Posterior cingulate gyrus (tissue), 11 donors: ENCODE measurements at regions of chr6 and their contacts with region 1.

Region 1: DNA sequence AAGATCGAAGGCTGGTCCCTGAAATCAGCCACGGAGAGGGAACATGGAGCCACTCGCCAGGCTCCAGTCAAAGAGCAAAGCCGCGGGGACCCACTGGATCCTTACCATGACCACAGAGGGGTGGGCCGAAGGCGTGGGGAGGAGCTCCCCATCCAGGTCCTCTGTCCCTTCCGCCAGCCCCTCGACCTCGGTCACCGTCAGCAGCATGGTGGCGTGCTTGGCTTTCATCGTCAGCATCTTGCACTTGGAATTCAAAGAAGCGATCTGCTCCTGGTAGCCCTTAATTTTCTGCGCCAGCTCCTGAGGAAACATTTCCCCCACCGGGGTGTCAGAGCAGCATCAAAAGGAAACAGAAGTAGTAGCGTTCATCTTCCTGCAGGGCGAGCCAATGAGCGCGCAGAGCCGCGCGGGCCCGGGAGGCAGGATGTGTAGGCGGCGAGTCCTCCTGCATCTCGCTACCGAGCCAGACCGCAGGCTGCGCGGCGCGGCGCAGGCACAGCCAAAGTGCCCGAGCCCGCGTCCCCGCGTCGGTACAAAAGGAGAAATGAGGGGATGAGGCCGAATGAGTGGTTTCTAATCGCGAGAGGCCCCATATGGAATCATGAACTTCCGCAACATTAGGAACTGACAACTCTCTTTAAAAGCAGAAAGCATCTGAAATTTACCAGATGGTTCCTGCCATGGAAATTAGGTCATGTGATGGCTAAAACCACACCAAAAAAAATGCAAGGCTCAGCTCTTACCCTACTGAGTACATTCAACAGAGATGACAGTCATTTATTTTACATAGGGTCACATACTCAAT is 335.2 kb downstream of the SYNE1 start:
- DNase-seq: peak; percentile 79 to 99 (median 92)

Region 2: DNA sequence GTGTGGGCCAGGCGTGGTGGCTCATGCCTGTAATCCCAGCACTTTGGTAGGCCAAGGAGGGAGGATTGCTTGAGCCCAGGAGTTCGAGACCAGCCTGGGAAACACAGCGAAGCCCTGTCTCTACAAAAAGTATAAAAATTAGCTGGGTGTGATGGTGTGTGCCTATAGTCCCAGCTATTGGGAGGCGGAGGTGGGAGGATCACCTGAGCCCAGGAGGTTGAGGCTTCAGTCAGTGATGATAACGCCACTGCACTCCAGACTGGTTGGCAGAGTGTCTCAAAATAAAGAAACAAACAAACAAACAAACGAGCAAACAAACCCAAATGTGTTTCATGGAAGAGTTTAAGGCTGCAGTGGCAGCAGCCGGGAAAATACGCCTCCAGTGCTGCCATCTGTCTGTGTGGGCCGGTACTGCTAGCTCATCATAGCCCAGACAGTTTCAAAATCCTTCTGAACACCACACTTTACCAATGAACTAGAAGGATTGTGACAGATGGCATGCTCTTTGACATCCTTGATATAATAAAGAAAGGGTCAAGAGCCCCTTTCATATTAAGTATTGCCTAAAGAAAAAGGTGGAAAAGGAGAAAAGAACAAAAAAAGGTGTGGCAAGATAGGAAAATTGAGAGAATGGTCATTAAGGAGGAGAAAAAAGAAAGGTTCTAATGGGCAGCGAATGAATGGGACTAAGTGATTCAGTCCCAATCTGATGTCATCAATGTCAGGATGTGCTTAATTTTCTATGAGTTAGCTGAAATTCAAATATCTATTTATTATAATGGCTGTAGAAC is 36.6 kb after region 1 on chr6:
- intact Hi-C with region 1: loop called (anchors 5 kb)
- DNase-seq: peak in 9 of 10 donors; percentile 21 to 87 (median 67)

Region 3: GRCh38 chr6:152380993-152381898 is 79.3 kb after region 1 on chr6:
- intact Hi-C with region 1: no loop called
- DNase-seq: peak; percentile 50 to 93 (median 61)

Region 4: GRCh38 chr6:152625213-152625612 is 323.2 kb after region 1 on chr6:
- intact Hi-C with region 1: no loop called
- DNase-seq: no peak